HAP-1 (cell line): ENCODE measurements at regions of chr13 and their contacts with region 1.

Region 1: DNA sequence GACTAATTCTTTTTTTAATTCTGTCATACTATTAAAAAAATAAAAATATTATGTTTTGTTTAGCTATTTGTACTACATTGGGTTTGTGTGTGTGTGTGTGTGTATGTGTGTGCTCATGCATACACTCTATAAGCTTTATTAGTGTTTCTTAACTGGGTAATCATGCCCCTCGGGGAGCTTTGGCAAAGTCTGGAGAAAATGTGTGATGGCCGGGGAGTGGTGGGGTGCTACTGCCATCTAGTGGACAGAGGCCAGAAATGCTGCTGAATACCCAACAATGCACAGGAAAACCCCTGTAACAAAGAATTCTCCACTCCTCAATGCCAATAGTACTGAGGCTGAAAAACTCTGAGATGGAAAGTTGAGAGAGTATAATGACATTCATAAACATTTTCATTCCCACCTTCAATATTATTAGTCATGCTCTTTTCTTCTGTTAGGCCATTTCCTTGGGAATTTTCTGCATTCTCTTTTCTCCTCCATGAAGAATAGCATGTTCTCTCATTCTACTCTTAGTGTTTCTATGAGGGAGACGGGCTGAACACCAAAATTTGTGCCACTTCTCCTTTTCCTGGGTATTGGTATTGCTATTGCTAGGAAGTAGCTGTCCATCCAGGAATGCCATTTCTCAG is 157.3 kb downstream of the DNAJC3 start:
- DNase-seq: peak; percentile 62 to 81
- H3K4me3 ChIP-seq: no peak overlapping the region
- H3K4me1 ChIP-seq: peaks cover 5% of the 10 kb centered on the region
- H3K27me3 ChIP-seq: no peaks in the 10 kb centered on the region

Region 2: GRCh38 chr13:95624020-95624419 is 210.2 kb before region 1 on chr13:
- in situ Hi-C with region 1: loop called (anchors 25 kb)
- DNase-seq: peak; percentile 39 to 73
- H3K4me3 ChIP-seq: no peak overlapping the region
- H3K4me1 ChIP-seq: no peaks in the 10 kb centered on the region
- H3K27me3 ChIP-seq: no peaks in the 10 kb centered on the region

Region 3: DNA sequence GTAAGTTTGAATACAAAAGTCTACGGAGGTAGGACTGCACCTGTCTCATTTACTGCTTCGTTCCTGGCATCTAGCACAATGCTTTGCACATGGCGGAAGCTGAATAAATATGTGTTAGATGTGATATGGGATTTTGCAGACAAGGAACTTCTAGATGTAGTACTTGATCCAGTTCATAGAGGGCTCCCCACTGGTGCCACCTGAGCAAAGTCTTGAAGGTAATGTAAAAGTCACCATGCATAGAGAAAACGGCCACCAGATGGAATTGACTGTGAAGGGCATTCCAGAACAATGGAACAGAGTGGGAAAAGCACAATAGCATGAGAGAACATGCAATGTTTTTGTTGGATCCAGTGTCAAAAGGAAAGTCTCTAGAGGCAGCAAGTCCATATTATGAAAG is 465.0 kb after region 1 on chr13:
- in situ Hi-C with region 1: no loop called
- DNase-seq: no peak
- H3K4me3 ChIP-seq: no peak overlapping the region
- H3K4me1 ChIP-seq: peaks cover 18% of the 10 kb centered on the region
- H3K27me3 ChIP-seq: no peaks in the 10 kb centered on the region